Psoas muscle (tissue), 8 donors: ENCODE measurements at regions of chr1 and their contacts with region 1.

Region 1: GRCh38 chr1:41432481-41433280 is 51.8 kb downstream of the EDN2 start:
- DNase-seq: peak; percentile 93 to 97
- ATAC-seq: peak; percentile 97 to 99 (median 98)
- H3K4me3 ChIP-seq: peak overlapping the region; percentile 22
- H3K27ac ChIP-seq: peak overlapping the region; percentile 71
- H3K4me1 ChIP-seq: peaks cover 19% of the 10 kb centered on the region
- H3K27me3 ChIP-seq: no peaks in the 10 kb centered on the region
- CTCF ChIP-seq: peak; percentile 96

Region 2: DNA sequence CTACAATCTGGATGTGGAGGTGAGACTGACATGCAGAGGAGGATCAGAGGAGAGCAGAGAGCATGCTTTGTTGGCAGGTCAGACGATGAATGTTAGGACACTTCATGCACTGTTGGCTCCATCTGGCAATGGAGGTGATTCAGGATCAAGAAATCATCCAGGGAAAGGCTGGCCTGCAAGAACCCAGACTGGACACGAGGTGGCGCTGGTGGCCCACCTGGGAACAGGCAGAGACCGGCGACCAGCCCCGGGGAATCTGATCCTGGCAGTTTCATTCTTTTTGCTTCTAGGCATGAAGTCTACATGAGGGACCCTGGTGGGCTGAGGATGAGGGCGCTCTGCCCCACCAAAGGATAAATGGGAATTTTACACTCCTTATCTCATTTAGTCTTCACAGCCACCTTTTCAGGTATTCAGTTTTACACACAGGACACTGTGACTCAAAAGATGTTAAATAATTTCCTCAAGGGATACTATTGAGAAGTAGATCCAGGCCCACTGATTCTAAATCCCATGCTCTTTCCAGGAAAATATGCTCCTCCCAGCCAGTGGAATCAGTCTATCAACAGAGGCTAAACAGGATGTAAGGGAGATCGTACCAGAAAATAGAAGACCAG is 164.4 kb before region 1 on chr1:
- intact Hi-C with region 1: loop called (anchors 2 to 5 kb)
- DNase-seq: peak; percentile 75 to 85
- ATAC-seq: peak; percentile 90 to 96 (median 94)
- H3K4me3 ChIP-seq: no peak overlapping the region
- H3K27ac ChIP-seq: no peak overlapping the region
- H3K4me1 ChIP-seq: peaks cover 3% of the 10 kb centered on the region
- H3K27me3 ChIP-seq: no peaks in the 10 kb centered on the region
- CTCF ChIP-seq: peak; percentile 99

Region 3: GRCh38 chr1:41282679-41283317 is 149.9 kb before region 1 on chr1:
- intact Hi-C with region 1: loop called (anchors 5 kb)
- DNase-seq: peak; percentile 24 to 65
- ATAC-seq: peak; percentile 69 to 85 (median 82)
- H3K4me3 ChIP-seq: no peak overlapping the region
- H3K27ac ChIP-seq: no peak overlapping the region
- H3K4me1 ChIP-seq: no peaks in the 10 kb centered on the region
- H3K27me3 ChIP-seq: no peaks in the 10 kb centered on the region
- CTCF ChIP-seq: peak; percentile 73

Region 4: DNA sequence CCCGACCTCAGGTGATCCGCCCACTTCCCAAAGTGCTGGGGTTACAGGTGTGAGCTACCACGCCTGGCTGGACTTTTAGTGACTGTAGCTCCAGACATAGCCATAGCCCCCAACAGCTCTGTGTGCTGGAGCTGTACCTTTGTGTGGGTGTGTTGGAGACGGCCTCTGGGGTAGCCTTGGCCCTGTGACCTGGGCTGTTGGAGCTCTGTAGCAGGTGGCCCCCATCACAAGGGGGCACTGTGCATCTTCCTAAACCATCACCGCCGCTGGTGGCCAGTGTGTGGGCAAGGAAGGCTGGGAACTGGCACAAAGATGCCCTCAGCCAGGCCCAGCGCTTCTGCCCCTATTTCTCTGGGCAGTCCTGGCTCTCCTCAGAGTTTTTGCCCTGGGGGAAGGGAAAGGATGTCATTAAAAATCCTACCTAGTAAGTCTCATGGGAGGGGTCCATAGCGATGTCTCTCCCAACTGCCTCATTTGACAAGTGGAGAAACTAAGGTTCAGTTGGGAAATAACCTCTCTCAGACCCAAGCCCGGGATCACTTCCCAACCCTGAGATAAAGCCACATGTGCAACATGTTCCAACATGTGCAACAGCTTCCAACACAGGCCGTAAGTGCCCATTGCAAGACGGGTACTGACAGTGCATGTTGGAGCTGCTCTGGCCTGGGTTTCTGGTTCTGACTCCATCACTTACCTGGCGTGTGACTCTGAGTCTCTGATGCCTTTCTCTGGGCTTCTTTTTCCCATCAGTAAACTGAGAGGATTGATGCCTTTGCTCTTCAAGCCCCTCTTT is 109.7 kb before region 1 on chr1:
- intact Hi-C with region 1: loop called (anchors 2 to 5 kb)
- DNase-seq: peak; percentile 60 to 83
- ATAC-seq: peak; percentile 86 to 94 (median 90)
- H3K4me3 ChIP-seq: no peak overlapping the region
- H3K27ac ChIP-seq: no peak overlapping the region
- H3K4me1 ChIP-seq: peaks cover 24% of the 10 kb centered on the region
- H3K27me3 ChIP-seq: no peaks in the 10 kb centered on the region
- CTCF ChIP-seq: peak; percentile 63

Region 5: GRCh38 chr1:41977326-41977725 is 544.6 kb after region 1 on chr1:
- intact Hi-C with region 1: no loop called
- DNase-seq: no peak
- ATAC-seq: no peak
- H3K4me3 ChIP-seq: no peak overlapping the region
- H3K27ac ChIP-seq: no peak overlapping the region
- H3K4me1 ChIP-seq: no peaks in the 10 kb centered on the region
- H3K27me3 ChIP-seq: no peaks in the 10 kb centered on the region
- CTCF ChIP-seq: no peak